Vagina (tissue), 2 donors: ENCODE measurements at regions of chr3 and their contacts with region 1.

Region 1: GRCh38 chr3:132867956-132868355 is 145.7 kb upstream of the NPHP3 start:
- DNase-seq: no peak
- H3K4me3 ChIP-seq: no peak overlapping the region
- H3K27ac ChIP-seq: no peak overlapping the region
- H3K4me1 ChIP-seq: no peaks in the 10 kb centered on the region
- H3K27me3 ChIP-seq: no peaks in the 10 kb centered on the region
- CTCF ChIP-seq: no peak
- POLR2A ChIP-seq: no peak

Region 2: GRCh38 chr3:132892951-132893350 is 25.0 kb after region 1 on chr3:
- intact Hi-C with region 1: no loop called
- DNase-seq: no peak
- H3K4me3 ChIP-seq: no peak overlapping the region
- H3K27ac ChIP-seq: no peak overlapping the region
- H3K4me1 ChIP-seq: no peaks in the 10 kb centered on the region
- H3K27me3 ChIP-seq: no peaks in the 10 kb centered on the region
- CTCF ChIP-seq: no peak
- POLR2A ChIP-seq: no peak

Region 3: DNA sequence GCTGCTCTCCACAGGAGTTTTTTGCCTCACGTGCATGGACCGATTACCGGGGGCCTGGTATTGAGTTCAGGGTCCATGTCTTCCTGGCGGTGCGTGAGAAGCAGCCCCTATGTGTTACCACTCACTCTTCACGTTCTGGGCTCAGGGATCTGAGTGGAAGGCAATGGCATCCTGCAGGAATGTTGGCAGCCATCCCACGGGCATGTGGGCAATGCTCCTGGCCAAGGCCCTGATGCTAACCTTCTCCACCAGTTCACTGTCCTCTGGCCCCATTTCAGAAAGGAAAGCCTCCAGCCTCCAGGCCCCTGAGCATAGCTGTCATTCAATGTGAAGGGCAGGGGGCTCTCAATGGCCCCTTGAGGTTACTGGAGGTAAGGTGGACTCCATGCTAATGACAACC is 1825.8 kb after region 1 on chr3:
- intact Hi-C with region 1: loop called (anchors 5 kb)
- DNase-seq: no peak
- H3K4me3 ChIP-seq: no peak overlapping the region
- H3K27ac ChIP-seq: no peak overlapping the region
- H3K4me1 ChIP-seq: peaks cover 7% of the 10 kb centered on the region
- H3K27me3 ChIP-seq: no peaks in the 10 kb centered on the region
- CTCF ChIP-seq: no peak
- POLR2A ChIP-seq: no peak